GM12878 (cell line): ENCODE measurements at regions of chr9 and their contacts with region 1.

Region 1: DNA sequence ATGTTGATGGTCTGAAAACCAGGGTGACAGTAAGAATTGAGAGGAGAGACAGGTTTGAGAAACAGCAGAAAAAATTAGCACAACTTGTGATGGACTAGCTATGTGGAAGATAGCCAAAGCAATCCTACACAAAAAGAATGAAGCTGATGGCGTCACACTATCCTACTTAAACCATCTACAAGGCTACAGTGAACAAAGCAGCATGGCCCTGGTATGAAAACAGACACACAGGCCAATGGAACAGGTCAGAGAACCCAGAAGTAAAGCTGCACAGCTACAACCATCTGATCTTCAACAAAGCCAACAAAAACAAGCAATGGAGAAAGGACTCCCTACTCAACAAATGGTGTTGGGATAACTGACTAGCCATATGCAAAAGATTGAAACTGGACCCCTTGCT is 7.5 kb upstream of the UBE2R2 start:
- DNase-seq: no peak
- ATAC-seq: no peak
- H3K4me3 ChIP-seq: no peak overlapping the region
- H3K27ac ChIP-seq: no peak overlapping the region
- H3K4me1 ChIP-seq: peaks cover 7% of the 10 kb centered on the region
- H3K27me3 ChIP-seq: no peaks in the 10 kb centered on the region
- CTCF ChIP-seq: no peak
- EP300 ChIP-seq: no peak
- POLR2A ChIP-seq: no peak
- RAD21 ChIP-seq: no peak

Region 2: GRCh38 chr9:33924978-33925797 is 115.7 kb after region 1 on chr9:
- CTCF ChIA-PET with region 1: interaction called, 28 read pairs
- POLR2A ChIA-PET with region 1: no interaction called
- RAD21 ChIA-PET with region 1: interaction called, 8 read pairs
- SMC1A ChIA-PET with region 1: interaction called, 9 read pairs
- in situ Hi-C with region 1: no loop called
- intact Hi-C with region 1: loop called (anchors 5 kb)
- DNase-seq: no peak
- ATAC-seq: peak; percentile 60
- H3K4me3 ChIP-seq: no peak overlapping the region
- H3K27ac ChIP-seq: no peak overlapping the region
- H3K4me1 ChIP-seq: no peaks in the 10 kb centered on the region
- H3K27me3 ChIP-seq: no peaks in the 10 kb centered on the region
- CTCF ChIP-seq: peak; percentile 38 to 57 (median 47); a peak in 5 of 6 replicates
- EP300 ChIP-seq: no peak
- POLR2A ChIP-seq: peak; percentile 31; the same call in 1 of the 2 replicates
- RAD21 ChIP-seq: peak; percentile 41